ENCODE measurements at regions of chr15 and their contacts with region 1.

Region 1: GRCh38 chr15:67479781-67480505 is 41.0 kb upstream of the C15orf61 start:
- DNase-seq: no peak
- ATAC-seq: no peak
- H3K4me3 ChIP-seq: no peak overlapping the region
- H3K4me3 Mint-ChIP-seq: no peak overlapping the region
- H3K27ac ChIP-seq: no peak overlapping the region
- H3K27ac Mint-ChIP-seq: no peak overlapping the region
- H3K4me1 ChIP-seq: no peaks in the 10 kb centered on the region
- H3K4me1 Mint-ChIP-seq: peaks cover 12% of the 10 kb centered on the region
- H3K27me3 ChIP-seq: no peaks in the 10 kb centered on the region
- H3K27me3 Mint-ChIP-seq: no peaks in the 10 kb centered on the region
- CTCF ChIP-seq: no peak

Region 2: DNA sequence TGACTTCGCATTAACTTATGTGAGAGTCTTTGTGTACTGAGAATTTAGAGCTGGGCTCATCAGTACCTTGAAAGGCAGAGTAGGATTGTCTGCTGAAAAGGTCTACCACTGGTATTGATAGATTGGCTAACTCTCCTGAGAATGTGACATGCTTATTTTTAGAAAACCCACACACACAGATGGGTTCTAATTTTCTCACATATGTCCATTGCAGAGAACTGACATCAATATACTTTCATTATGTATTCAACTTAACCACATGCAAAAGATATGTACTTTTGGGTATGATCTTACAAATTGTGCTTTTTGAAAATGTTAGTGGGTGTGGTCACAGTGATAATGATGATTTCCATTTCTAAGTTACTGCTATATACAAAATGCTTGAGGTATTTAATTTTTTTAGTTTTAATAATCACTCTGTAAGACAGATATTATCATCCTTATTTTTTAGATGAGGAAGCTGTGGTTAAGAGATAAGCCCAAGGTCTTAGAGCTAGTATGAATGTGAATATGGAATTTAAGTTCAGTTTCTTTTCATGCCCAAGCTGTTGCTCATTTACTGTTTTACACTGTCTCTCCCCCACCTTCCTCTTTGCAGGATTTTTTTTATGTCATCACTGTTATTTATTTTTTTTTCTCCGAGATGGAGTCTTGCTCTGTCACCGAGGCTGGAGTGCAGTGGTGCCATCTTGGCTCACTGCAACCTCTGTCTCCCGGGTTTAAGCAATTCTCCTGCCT is 84.8 kb after region 1 on chr15:
- CTCF ChIA-PET with region 1: no interaction called
- POLR2A ChIA-PET with region 1: no interaction called
- intact Hi-C with region 1: loop called in 1 of 2 experiments (anchors 10 kb)
- DNase-seq: no peak
- ATAC-seq: no peak
- H3K4me3 ChIP-seq: no peak overlapping the region
- H3K4me3 Mint-ChIP-seq: no peak overlapping the region
- H3K27ac ChIP-seq: no peak overlapping the region
- H3K27ac Mint-ChIP-seq: peak overlapping the region; percentile 13
- H3K4me1 ChIP-seq: no peaks in the 10 kb centered on the region
- H3K4me1 Mint-ChIP-seq: peaks cover 42% of the 10 kb centered on the region
- H3K27me3 ChIP-seq: no peaks in the 10 kb centered on the region
- H3K27me3 Mint-ChIP-seq: no peaks in the 10 kb centered on the region
- CTCF ChIP-seq: no peak

Region 3: GRCh38 chr15:67601073-67601472 is 121.1 kb after region 1 on chr15:
- CTCF ChIA-PET with region 1: no interaction called
- POLR2A ChIA-PET with region 1: no interaction called
- intact Hi-C with region 1: no loop called
- DNase-seq: no peak
- ATAC-seq: no peak
- H3K4me3 ChIP-seq: no peak overlapping the region
- H3K4me3 Mint-ChIP-seq: no peak overlapping the region
- H3K27ac ChIP-seq: no peak overlapping the region
- H3K27ac Mint-ChIP-seq: no peak overlapping the region
- H3K4me1 ChIP-seq: no peaks in the 10 kb centered on the region
- H3K4me1 Mint-ChIP-seq: no peaks in the 10 kb centered on the region
- H3K27me3 ChIP-seq: no peaks in the 10 kb centered on the region
- H3K27me3 Mint-ChIP-seq: no peaks in the 10 kb centered on the region
- CTCF ChIP-seq: no peak

Measured in CD4-positive, alpha-beta T cell (primary cell).